AG04449 (cell line): ENCODE measurements at regions of chr17 and their contacts with region 1.

Region 1: GRCh38 chr17:39687811-39688518 is at the start of gene PGAP3:
- DNase-seq: peak; percentile 44
- H3K4me3 ChIP-seq: peak within 1 kb of the TSS; percentile 76
- CTCF ChIP-seq: no peak

Region 2: GRCh38 chr17:39668199-39668966 is 19.6 kb before region 1 on chr17 and contains the start of gene PNMT:
- CTCF ChIA-PET with region 1: interaction called, 10 read pairs
- POLR2A ChIA-PET with region 1: no interaction called
- DNase-seq: no peak
- H3K4me3 ChIP-seq: peak within 1 kb of the TSS; percentile 29
- CTCF ChIP-seq: peak; percentile 87

Region 3: GRCh38 chr17:39699818-39700147 is 11.8 kb after region 1 on chr17 and contains the start of gene ERBB2:
- CTCF ChIA-PET with region 1: interaction called, 13 read pairs
- POLR2A ChIA-PET with region 1: interaction called, 27 read pairs
- DNase-seq: peak; percentile 31
- H3K4me3 ChIP-seq: peak within 1 kb of the TSS; percentile 78
- CTCF ChIP-seq: no peak